IMR-90 (cell line): ENCODE measurements at regions of chr3 and their contacts with region 1.

Region 1: DNA sequence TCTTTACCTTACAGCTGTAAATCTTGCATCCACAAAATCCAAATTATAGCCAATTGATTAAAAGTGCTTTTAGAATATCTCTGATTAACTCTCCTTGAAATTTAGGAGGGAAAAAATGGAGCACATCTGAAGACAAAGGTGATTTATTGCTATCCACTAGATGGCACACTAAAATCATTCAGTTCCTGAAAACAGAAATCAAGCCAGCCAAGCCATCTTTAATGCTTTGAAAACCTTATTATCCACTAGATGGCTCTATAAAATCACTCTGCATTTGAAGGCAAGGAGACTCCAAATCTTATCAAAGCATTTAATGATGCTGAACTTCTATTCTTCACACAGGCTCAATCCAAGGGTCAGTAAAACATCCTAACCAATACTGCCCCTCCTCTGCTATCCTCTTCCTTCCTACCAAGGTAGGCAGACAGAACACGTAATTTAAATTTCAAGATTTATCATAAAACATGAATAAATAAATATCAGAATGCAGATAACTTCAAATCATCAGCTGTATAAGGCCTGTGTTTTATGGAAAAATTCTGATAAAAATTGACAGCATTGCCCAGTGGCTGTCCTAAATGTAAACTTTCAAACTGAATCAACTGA is 48.4 kb downstream of the GOLIM4 start:
- DNase-seq: peak; percentile 87
- ATAC-seq: peak; percentile 73
- H3K4me3 ChIP-seq: no peak overlapping the region
- H3K27ac ChIP-seq: no peak overlapping the region
- H3K4me1 ChIP-seq: peaks cover 13% of the 10 kb centered on the region
- H3K27me3 ChIP-seq: no peaks in the 10 kb centered on the region
- CTCF ChIP-seq: peak; percentile 99
- POLR2A ChIP-seq: peak; percentile 47; the same call in 1 of the 2 replicates
- RAD21 ChIP-seq: peak; percentile 94

Region 2: GRCh38 chr3:167734498-167735232 is 312.6 kb before region 1 on chr3 and contains the start of gene PDCD10:
- CTCF ChIA-PET with region 1: no interaction called
- POLR2A ChIA-PET with region 1: no interaction called
- dilution Hi-C with region 1: no loop called
- in situ Hi-C with region 1: no loop called
- intact Hi-C with region 1: loop called (anchors 10 kb)
- DNase-seq: peak; percentile 98
- ATAC-seq: peak; percentile 92
- H3K4me3 ChIP-seq: peak within 1 kb of the TSS; percentile 80
- H3K27ac ChIP-seq: peak within 1 kb of the TSS; percentile 79
- H3K4me1 ChIP-seq: no peaks in the 10 kb centered on the region
- H3K27me3 ChIP-seq: no peaks in the 10 kb centered on the region
- CTCF ChIP-seq: no peak
- POLR2A ChIP-seq: peak; percentile 71
- RAD21 ChIP-seq: no peak
- total RNA-seq, gene PDCD10: 36.7 and 63.0 TPM in 2 replicates

Region 3: GRCh38 chr3:167929968-167930367 is 117.3 kb before region 1 on chr3:
- CTCF ChIA-PET with region 1: no interaction called
- POLR2A ChIA-PET with region 1: no interaction called
- dilution Hi-C with region 1: no loop called
- in situ Hi-C with region 1: loop called (anchors 10 kb)
- intact Hi-C with region 1: no loop called
- DNase-seq: no peak
- ATAC-seq: peak; percentile 42; the same call in 1 of the 2 replicates
- H3K4me3 ChIP-seq: no peak overlapping the region
- H3K27ac ChIP-seq: no peak overlapping the region
- H3K4me1 ChIP-seq: no peaks in the 10 kb centered on the region
- H3K27me3 ChIP-seq: no peaks in the 10 kb centered on the region
- CTCF ChIP-seq: no peak
- POLR2A ChIP-seq: no peak
- RAD21 ChIP-seq: no peak

Region 4: DNA sequence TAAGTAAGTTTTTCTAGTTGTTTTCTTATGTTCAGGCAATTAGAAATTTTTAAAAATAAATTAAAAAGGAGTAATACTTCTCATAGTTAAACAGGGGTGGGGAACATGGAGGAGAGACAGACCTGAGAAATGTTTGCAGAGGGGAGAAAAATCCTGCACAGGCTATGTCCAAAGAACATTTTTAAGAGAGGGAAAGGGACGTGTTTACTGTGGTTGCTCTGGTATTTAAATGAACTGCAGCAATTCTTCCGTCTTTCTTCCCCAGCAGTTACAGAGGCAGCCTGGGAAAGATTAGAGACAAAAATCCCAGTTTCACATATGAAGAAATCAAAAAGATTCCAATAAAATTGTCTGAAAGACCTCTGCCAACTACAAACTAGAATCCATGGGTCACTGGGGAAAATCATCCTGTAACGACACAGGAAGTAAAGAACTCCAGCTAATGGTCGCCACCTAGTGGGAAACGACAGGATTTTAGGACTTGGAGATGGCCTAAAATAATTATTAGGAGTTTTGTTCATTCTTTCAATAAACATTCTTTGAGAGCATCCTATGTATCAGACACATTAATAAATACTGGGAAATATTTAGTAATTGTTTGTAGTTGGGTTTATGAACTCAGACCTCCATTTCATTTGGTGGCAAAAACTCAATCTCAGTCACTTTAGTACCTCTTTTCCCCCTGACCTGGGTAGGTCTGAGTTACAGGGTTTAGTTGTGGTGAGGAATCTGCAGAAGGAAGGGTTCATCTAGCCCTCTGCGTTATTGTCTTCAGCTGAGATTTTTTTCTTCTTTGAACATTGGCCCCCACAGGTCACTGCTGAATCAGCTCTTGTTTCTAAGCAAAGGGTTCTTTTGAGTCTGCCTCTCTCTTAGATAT is 118.3 kb after region 1 on chr3:
- CTCF ChIA-PET with region 1: interaction called, 30 read pairs
- POLR2A ChIA-PET with region 1: no interaction called
- dilution Hi-C with region 1: loop called (anchors 25 kb)
- in situ Hi-C with region 1: loop called (anchors 5 kb)
- intact Hi-C with region 1: loop called (anchors 1 kb)
- DNase-seq: peak; percentile 76
- ATAC-seq: peak; percentile 96
- H3K4me3 ChIP-seq: no peak overlapping the region
- H3K27ac ChIP-seq: no peak overlapping the region
- H3K4me1 ChIP-seq: no peaks in the 10 kb centered on the region
- H3K27me3 ChIP-seq: no peaks in the 10 kb centered on the region
- CTCF ChIP-seq: peak; percentile 92
- POLR2A ChIP-seq: peak; percentile 39; the same call in 1 of the 2 replicates
- RAD21 ChIP-seq: peak; percentile 93

Region 5: GRCh38 chr3:168467115-168467714 is 419.9 kb after region 1 on chr3:
- CTCF ChIA-PET with region 1: interaction called, 3 read pairs
- POLR2A ChIA-PET with region 1: no interaction called
- dilution Hi-C with region 1: no loop called
- in situ Hi-C with region 1: no loop called
- intact Hi-C with region 1: loop called (anchors 1 kb)
- DNase-seq: peak; percentile 55
- ATAC-seq: peak; percentile 90
- H3K4me3 ChIP-seq: no peak overlapping the region
- H3K27ac ChIP-seq: no peak overlapping the region
- H3K4me1 ChIP-seq: no peaks in the 10 kb centered on the region
- H3K27me3 ChIP-seq: no peaks in the 10 kb centered on the region
- CTCF ChIP-seq: peak; percentile 60
- POLR2A ChIP-seq: no peak
- RAD21 ChIP-seq: peak; percentile 73

Region 6: GRCh38 chr3:168974617-168975403 is 927.5 kb after region 1 on chr3:
- CTCF ChIA-PET with region 1: no interaction called
- POLR2A ChIA-PET with region 1: no interaction called
- dilution Hi-C with region 1: no loop called
- in situ Hi-C with region 1: no loop called
- intact Hi-C with region 1: no loop called
- DNase-seq: no peak
- ATAC-seq: no peak
- H3K4me3 ChIP-seq: no peak overlapping the region
- H3K27ac ChIP-seq: no peak overlapping the region
- H3K4me1 ChIP-seq: peaks cover 2% of the 10 kb centered on the region; the same call in 1 of the 2 replicates
- H3K27me3 ChIP-seq: no peaks in the 10 kb centered on the region
- CTCF ChIP-seq: no peak
- POLR2A ChIP-seq: no peak
- RAD21 ChIP-seq: no peak